HepG2 (cell line): ENCODE measurements at regions of chr6 and their contacts with region 1.

Region 1: DNA sequence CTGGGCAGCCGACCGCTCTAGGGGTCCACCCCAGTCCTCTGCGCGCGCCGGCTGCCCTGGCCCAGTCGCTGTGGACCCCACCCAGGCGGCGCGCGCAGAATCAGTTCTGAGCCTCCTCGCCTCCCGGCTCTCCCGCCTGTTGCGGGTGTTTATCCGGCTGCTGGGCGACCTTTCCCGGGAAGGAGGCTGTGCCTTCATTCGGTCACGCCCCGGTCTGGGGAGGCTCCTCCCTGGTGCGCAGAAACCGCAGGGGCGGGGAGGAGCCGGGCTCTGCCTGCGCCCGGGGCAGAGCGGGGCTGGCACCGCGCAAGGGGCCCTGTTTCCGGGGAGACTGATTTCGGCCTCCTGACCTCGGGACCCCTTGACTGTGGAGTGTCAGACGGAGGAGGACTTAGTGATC is 80.8 kb upstream of the EYS start:
- DNase-seq: no peak
- ATAC-seq: no peak
- H3K4me3 ChIP-seq: no peak overlapping the region
- H3K27ac ChIP-seq: no peak overlapping the region
- H3K4me1 ChIP-seq: no peaks in the 10 kb centered on the region
- H3K27me3 ChIP-seq: no peaks in the 10 kb centered on the region
- CTCF ChIP-seq: no peak
- EP300 ChIP-seq: no peak
- POLR2A ChIP-seq: no peak
- RAD21 ChIP-seq: no peak

Region 2: DNA sequence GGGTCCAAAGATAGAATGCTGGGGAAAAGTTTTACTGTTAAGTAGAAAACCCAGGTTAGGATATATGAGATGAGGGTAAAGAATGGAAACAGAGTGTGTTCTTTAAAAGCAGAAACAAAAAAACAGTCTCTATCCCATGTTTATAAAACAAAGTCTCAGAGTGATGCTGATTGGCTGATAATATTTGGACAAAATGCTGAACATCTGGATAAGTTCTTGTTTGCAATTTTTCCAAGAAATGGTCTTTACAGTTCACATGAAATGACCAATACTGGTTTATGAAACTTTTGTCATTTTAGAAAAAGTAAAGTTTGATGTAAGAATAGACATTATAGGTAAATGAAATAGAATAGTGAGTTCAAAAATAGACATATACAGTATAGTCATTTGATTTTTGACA is 15.4 kb after region 1 on chr6:
- CTCF ChIA-PET with region 1: no interaction called
- POLR2A ChIA-PET with region 1: no interaction called
- in situ Hi-C with region 1: no loop called
- intact Hi-C with region 1: loop called (anchors 2 kb)
- DNase-seq: no peak
- ATAC-seq: no peak
- H3K4me3 ChIP-seq: no peak overlapping the region
- H3K27ac ChIP-seq: no peak overlapping the region
- H3K4me1 ChIP-seq: no peaks in the 10 kb centered on the region
- H3K27me3 ChIP-seq: no peaks in the 10 kb centered on the region
- CTCF ChIP-seq: no peak
- EP300 ChIP-seq: no peak
- POLR2A ChIP-seq: no peak
- RAD21 ChIP-seq: no peak

Region 3: GRCh38 chr6:66065313-66065712 is 277.5 kb after region 1 on chr6:
- CTCF ChIA-PET with region 1: no interaction called
- POLR2A ChIA-PET with region 1: no interaction called
- in situ Hi-C with region 1: no loop called
- intact Hi-C with region 1: no loop called
- DNase-seq: no peak
- ATAC-seq: no peak
- H3K4me3 ChIP-seq: no peak overlapping the region
- H3K27ac ChIP-seq: no peak overlapping the region
- H3K4me1 ChIP-seq: no peaks in the 10 kb centered on the region
- H3K27me3 ChIP-seq: no peaks in the 10 kb centered on the region
- CTCF ChIP-seq: no peak
- EP300 ChIP-seq: no peak
- POLR2A ChIP-seq: no peak
- RAD21 ChIP-seq: no peak